ENCODE measurements at regions of chr12 and their contacts with region 1.

Region 1: GRCh38 chr12:112992541-112993398 is 14.5 kb downstream of the OAS2 start:
- DNase-seq: peak; percentile 61
- ATAC-seq: peak; percentile 90
- H3K4me3 ChIP-seq: no peak overlapping the region
- H3K27ac ChIP-seq: no peak overlapping the region
- H3K4me1 ChIP-seq: no peaks in the 10 kb centered on the region
- H3K27me3 ChIP-seq: no peaks in the 10 kb centered on the region
- CTCF ChIP-seq: peak; percentile 99 to 100 (median 99)
- POLR2A ChIP-seq: no peak
- RAD21 ChIP-seq: peak; percentile 92

Region 2: DNA sequence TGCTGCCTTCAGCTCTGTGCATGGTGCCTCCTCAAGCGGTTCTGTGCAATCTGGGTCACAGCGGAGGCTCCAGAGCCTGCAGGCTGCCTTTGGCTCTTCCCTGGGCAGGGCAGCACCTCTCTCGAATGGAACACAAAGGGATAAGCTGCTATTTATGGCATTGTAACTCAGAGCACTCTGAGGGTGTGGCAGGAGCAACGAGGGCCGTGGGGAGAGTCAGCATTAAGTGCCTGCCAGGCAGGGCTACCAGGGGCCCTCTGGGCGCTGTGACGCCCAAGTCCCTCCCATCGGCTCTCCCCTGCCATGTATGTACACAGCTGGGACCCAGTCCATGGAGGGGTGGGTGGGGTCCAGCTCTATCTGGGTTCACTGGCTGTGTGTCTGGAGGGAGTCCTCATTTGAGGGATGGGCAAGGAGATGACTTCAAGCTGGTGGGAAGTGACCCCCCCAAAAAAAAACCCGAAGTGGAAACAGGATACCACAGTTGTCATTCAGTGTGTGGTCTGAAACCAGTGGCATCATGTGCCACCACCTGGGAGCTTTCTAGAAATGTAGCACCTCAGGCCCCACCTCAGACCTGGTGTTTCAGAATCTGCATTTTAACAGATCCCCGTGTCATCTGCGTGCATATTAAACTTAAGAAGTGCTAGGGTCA is 130.0 kb before region 1 on chr12:
- CTCF ChIA-PET with region 1: no interaction called
- POLR2A ChIA-PET with region 1: no interaction called
- RAD21 ChIA-PET with region 1: no interaction called
- intact Hi-C with region 1: no loop called
- DNase-seq: no peak
- ATAC-seq: no peak
- H3K4me3 ChIP-seq: no peak overlapping the region
- H3K27ac ChIP-seq: no peak overlapping the region
- H3K4me1 ChIP-seq: no peaks in the 10 kb centered on the region
- H3K27me3 ChIP-seq: peaks cover 80% of the 10 kb centered on the region
- CTCF ChIP-seq: no peak
- POLR2A ChIP-seq: no peak
- RAD21 ChIP-seq: no peak

Region 3: DNA sequence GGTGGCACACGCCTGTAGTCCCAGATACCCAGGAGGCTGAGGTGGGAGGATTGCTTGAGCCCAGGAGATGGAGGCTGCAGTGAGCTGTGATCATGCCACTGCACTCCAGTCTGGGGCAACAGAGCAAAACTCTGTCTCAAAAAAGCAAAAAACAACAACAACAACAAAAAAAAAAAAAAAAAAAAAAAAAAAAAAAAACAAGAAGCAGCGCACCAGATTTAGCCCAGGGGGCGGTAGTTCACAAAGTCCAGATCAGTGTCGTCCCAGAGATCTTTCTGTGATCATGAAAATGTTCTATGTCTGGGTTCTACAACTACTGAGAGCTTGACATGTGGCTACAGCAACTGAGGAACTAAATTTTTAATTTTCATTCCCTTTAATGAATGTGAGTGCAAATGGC is 13.0 kb after region 1 on chr12:
- CTCF ChIA-PET with region 1: interaction called, 37 read pairs
- POLR2A ChIA-PET with region 1: no interaction called
- RAD21 ChIA-PET with region 1: interaction called in 1 of 2 experiments, 3 read pairs
- intact Hi-C with region 1: no loop called
- DNase-seq: peak; percentile 4
- ATAC-seq: no peak
- H3K4me3 ChIP-seq: no peak overlapping the region
- H3K27ac ChIP-seq: no peak overlapping the region
- H3K4me1 ChIP-seq: peaks cover 14 to 27% of the 10 kb centered on the region in 2 experiments
- H3K27me3 ChIP-seq: no peaks in the 10 kb centered on the region
- CTCF ChIP-seq: peak; percentile 38 to 57 (median 48); a peak in 5 of 6 replicates
- POLR2A ChIP-seq: no peak
- RAD21 ChIP-seq: peak; percentile 28; the same call in 1 of the 2 replicates

Region 4: DNA sequence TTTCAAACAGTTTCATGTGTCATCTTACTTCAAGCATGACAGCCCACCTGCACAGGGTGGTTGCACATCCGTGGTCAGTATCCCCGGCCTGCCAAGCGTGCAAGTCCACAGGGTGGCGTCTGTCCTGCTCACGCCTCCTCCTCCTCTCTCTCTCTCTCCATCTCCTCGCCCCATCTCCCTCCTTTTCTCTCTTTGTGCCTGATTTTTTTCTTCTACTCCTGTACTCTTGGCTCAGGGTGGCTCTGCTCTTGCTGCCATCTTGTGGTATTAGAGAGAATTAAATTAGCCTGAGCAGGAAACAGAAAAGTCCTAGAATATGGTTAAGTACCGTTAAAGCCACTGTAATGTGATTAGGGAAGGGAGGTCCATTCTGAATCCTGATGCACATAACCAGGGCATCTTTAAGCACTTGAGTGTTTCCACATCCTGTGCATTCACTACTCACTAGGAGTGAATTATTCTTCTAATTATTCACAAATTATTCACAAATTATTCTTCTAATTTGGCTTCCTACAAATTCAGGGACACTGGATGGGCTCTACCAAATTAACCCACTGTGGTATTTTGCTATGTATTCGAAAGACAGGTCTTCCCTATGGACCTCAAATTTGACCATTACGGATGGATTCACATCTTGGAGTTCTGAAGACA is 38.2 kb after region 1 on chr12:
- CTCF ChIA-PET with region 1: interaction called, 20 read pairs
- POLR2A ChIA-PET with region 1: no interaction called
- RAD21 ChIA-PET with region 1: interaction called in 1 of 2 experiments, 5 read pairs
- intact Hi-C with region 1: loop called (anchors 1 kb)
- DNase-seq: peak; percentile 82
- ATAC-seq: peak; percentile 98
- H3K4me3 ChIP-seq: no peak overlapping the region
- H3K27ac ChIP-seq: no peak overlapping the region
- H3K4me1 ChIP-seq: peaks cover 0 to 5% of the 10 kb centered on the region in 2 experiments; a peak in 1 of 4 replicates
- H3K27me3 ChIP-seq: no peaks in the 10 kb centered on the region
- CTCF ChIP-seq: peak; percentile 73 to 97 (median 83)
- POLR2A ChIP-seq: no peak
- RAD21 ChIP-seq: peak; percentile 83

Region 5: DNA sequence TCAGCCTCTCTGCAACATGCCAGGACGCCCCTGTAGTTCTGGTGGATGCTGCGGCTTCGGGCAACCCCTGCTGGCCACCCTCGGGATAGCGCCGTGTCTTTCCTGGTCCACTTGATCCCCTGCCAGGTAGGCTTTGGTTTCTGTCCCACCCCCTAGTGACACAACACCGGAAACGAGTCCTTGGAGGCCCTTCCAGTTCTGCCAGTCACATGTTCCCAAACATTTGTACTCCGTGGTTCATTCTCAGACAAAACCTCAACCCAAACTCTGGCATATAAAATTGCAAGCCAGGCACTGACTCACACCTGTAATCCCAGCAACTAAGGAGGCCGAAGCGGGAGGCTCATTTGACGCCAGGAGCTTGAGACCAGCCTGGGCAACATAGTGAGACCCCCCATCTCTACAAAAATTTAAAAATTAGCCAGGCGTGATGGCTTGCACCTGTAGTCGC is 105.7 kb after region 1 on chr12:
- CTCF ChIA-PET with region 1: interaction called, 9 read pairs
- POLR2A ChIA-PET with region 1: no interaction called
- RAD21 ChIA-PET with region 1: interaction called, 3 to 4 read pairs
- intact Hi-C with region 1: loop called (anchors 1 kb)
- DNase-seq: peak; percentile 79
- ATAC-seq: peak; percentile 87
- H3K4me3 ChIP-seq: no peak overlapping the region
- H3K27ac ChIP-seq: peak overlapping the region; percentile 39
- H3K4me1 ChIP-seq: peaks cover 6 to 14% of the 10 kb centered on the region in 2 experiments; a peak in 3 of 4 replicates
- H3K27me3 ChIP-seq: no peaks in the 10 kb centered on the region
- CTCF ChIP-seq: peak; percentile 86 to 93 (median 93)
- POLR2A ChIP-seq: no peak
- RAD21 ChIP-seq: peak; percentile 84

Region 6: GRCh38 chr12:113152835-113153814 is 160.4 kb after region 1 on chr12:
- CTCF ChIA-PET with region 1: interaction called, 25 read pairs
- POLR2A ChIA-PET with region 1: no interaction called
- RAD21 ChIA-PET with region 1: interaction called in 1 of 2 experiments, 3 read pairs
- intact Hi-C with region 1: loop called (anchors 1 kb)
- DNase-seq: peak; percentile 54
- ATAC-seq: peak; percentile 82
- H3K4me3 ChIP-seq: peak overlapping the region; percentile 43 to 56
- H3K27ac ChIP-seq: peak overlapping the region; percentile 44
- H3K4me1 ChIP-seq: peaks cover 19 to 36% of the 10 kb centered on the region in 2 experiments
- H3K27me3 ChIP-seq: no peaks in the 10 kb centered on the region
- CTCF ChIP-seq: peak; percentile 41 to 83 (median 52)
- POLR2A ChIP-seq: no peak
- RAD21 ChIP-seq: peak; percentile 89

Region 7: GRCh38 chr12:113174461-113175384 is 182.0 kb after region 1 on chr12:
- CTCF ChIA-PET with region 1: interaction called, 29 read pairs
- POLR2A ChIA-PET with region 1: no interaction called
- RAD21 ChIA-PET with region 1: no interaction called
- intact Hi-C with region 1: loop called (anchors 1 kb)
- DNase-seq: no peak
- ATAC-seq: peak; percentile 91
- H3K4me3 ChIP-seq: no peak overlapping the region
- H3K27ac ChIP-seq: no peak overlapping the region
- H3K4me1 ChIP-seq: no peaks in the 10 kb centered on the region
- H3K27me3 ChIP-seq: no peaks in the 10 kb centered on the region
- CTCF ChIP-seq: peak; percentile 90 to 99 (median 94)
- POLR2A ChIP-seq: no peak
- RAD21 ChIP-seq: peak; percentile 88